Right ventricle myocardium superior (tissue), 1 donor: ENCODE measurements at regions of chr17 and their contacts with region 1.

Region 1: DNA sequence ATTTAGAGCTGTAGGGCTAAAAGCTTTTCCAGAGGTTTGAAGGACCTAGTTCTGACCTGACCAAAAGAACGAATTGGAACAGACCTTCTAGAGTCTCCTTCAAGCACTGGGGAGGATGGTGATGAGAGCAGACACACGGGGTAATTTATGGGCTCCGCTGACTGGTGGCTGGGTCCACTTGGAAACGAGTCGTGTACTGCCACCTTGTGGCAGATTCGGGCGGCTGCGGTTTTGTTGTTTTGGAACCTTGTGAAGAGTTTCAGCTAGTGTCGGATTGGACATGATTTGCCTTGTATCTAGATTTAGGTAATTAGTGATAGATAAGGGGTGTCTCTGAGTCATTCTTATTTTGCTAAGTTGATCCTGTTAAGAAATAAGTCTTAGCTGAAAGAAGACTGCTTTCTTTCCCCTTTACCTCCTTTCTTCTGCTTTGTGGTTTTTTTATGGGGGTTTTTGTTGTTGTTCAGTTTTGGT is 98.9 kb downstream of the AATF start:
- DNase-seq: peak; percentile 84
- ATAC-seq: peak; percentile 86

Region 2: GRCh38 chr17:36632916-36633771 is 414.5 kb before region 1 on chr17:
- intact Hi-C with region 1: loop called (anchors 5 kb)
- DNase-seq: no peak
- ATAC-seq: no peak

Region 3: GRCh38 chr17:36931697-36932382 is 115.8 kb before region 1 on chr17:
- intact Hi-C with region 1: no loop called
- DNase-seq: no peak
- ATAC-seq: no peak